ENCODE measurements at regions of chr1 and their contacts with region 1.

Region 1: DNA sequence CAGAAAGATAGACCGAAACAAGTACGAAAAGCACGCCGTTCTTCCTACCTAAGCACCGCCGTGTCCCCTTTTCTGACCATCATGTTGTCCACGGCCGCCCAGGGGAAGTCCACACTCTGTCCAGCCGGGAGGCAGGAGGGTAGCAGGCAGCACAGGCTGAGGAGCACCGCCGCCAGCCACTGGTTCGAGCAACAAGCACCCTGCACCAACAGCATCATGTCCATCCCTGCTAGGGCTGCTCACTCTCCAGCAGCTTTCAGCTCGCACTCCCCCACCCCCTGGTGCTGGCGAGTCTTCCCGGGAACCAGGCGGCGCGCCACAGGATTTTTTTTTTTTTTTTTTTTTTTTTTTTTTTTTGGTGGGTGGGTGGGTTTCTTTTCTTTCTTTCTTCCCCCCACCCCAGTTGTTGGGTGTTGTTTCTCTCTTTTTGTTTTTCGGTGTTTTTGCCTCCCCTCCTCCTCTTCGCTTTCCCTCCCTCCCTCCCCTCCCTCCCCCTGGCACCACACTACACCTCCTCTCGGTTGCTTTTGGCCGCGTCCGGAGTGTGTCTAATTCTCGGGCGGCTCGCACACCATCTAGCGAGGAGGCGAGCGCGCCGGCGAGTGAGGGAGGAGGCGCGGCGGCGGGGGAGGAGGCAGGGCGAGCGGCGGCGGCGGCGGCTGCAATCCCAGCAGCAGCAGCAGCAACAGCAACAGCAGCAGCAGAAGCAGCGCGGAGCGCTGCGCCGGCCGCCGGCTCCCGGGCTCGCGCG is at the start of gene NEGR1:
- DNase-seq: peak; percentile 77
- H3K4me3 ChIP-seq: peak within 1 kb of the TSS; percentile 39 to 60 (median 50)
- H3K27ac ChIP-seq: peak within 1 kb of the TSS; percentile 79 to 94 (median 87)
- H3K4me1 ChIP-seq: peaks cover 0 to 16% (median 7%) of the 10 kb centered on the region in 4 donors
- H3K27me3 ChIP-seq: peaks cover 40% of the 10 kb centered on the region
- CTCF ChIP-seq: peak in 1 of 5 experiments; percentile 14
- EP300 ChIP-seq: no peak
- POLR2A ChIP-seq: peak; percentile 62
- total RNA-seq, gene NEGR1: 7.0 to 10.0 (median 8.1) TPM

Region 2: DNA sequence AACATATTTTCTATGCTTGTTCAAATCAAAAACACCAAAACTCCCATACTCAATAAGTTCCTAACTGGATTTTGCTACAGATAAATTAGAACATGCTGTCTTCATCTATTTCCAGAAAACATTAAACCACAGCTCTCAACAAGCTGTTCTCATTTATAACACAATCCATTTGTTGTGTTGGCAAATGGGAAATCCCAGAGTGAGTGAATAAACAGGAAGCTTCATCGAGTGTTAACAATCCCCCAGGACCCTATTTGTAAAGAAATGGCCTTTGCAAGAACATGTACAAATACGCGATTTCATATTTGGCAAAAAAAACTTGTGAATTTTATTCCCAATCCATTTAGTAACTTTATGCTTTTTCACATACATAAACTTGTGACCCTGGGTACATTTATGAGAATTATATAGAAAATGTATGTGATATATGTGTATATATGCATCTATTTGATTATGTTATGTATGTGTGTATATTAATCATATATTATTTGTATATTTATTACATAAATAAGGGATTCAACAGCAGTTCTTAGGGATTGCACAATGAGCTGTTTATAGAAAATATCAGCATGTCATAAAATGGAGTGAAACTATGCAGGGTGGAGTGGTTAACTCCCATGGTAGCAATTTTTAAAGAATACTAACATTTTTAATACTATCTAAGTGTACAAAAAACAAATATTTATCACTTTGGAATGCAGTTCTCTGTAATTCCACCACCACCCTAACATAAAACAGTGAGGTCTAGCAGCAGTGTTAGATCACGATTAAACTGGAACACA is 160.2 kb before region 1 on chr1:
- in situ Hi-C with region 1: no loop called
- intact Hi-C with region 1: no loop called
- DNase-seq: no peak
- H3K4me3 ChIP-seq: no peak overlapping the region
- H3K27ac ChIP-seq: peak overlapping the region; percentile 16 to 39 (median 29)
- H3K4me1 ChIP-seq: no peaks in the 10 kb centered on the region
- H3K27me3 ChIP-seq: no peaks in the 10 kb centered on the region
- CTCF ChIP-seq: no peak
- EP300 ChIP-seq: no peak
- POLR2A ChIP-seq: no peak

Region 3: DNA sequence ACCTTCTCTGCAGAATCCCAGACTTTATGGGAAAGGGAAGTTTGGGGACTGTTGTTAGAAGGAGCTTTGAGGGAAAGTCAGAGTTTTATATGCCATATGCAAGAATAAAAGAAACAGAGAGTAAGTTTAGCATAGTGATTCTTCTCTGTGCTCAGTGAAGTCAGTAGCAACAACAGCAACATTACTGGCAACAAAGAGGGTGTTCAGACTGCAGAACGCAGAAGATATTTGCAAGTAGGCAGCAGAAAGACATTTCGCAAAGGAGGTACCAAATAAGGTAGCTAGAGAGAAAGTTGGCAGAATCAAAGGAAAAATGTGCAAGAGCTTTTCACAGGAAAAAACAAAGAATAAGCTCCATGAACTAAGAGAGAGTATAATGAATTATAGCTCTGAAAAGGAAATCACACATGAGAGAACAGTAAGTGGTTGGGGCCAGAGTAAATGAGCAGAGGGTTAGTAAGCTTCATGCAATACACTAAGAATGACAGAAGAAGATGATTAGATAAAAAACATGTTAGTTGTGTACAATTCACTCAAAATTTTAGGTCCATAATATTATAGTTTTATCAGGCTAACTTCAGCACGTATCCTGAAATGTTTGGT is 98.2 kb before region 1 on chr1:
- in situ Hi-C with region 1: no loop called
- intact Hi-C with region 1: loop called (anchors 5 kb)
- DNase-seq: no peak
- H3K4me3 ChIP-seq: no peak overlapping the region
- H3K27ac ChIP-seq: peak overlapping the region; percentile 1 to 50 (median 24)
- H3K4me1 ChIP-seq: peaks cover 0 to 2% (median 0%) of the 10 kb centered on the region in 4 donors
- H3K27me3 ChIP-seq: no peaks in the 10 kb centered on the region
- CTCF ChIP-seq: no peak
- EP300 ChIP-seq: no peak
- POLR2A ChIP-seq: no peak

Region 4: GRCh38 chr1:72371259-72372035 is 89.0 kb after region 1 on chr1:
- in situ Hi-C with region 1: no loop called
- intact Hi-C with region 1: no loop called
- DNase-seq: no peak
- H3K4me3 ChIP-seq: no peak overlapping the region
- H3K27ac ChIP-seq: no peak overlapping the region
- H3K4me1 ChIP-seq: no peaks in the 10 kb centered on the region
- H3K27me3 ChIP-seq: no peaks in the 10 kb centered on the region
- CTCF ChIP-seq: no peak
- EP300 ChIP-seq: no peak
- POLR2A ChIP-seq: no peak

Region 5: GRCh38 chr1:72412286-72412685 is 129.8 kb after region 1 on chr1:
- in situ Hi-C with region 1: no loop called
- intact Hi-C with region 1: no loop called
- DNase-seq: no peak
- H3K4me3 ChIP-seq: no peak overlapping the region
- H3K27ac ChIP-seq: no peak overlapping the region
- H3K4me1 ChIP-seq: no peaks in the 10 kb centered on the region
- H3K27me3 ChIP-seq: no peaks in the 10 kb centered on the region
- CTCF ChIP-seq: no peak
- EP300 ChIP-seq: no peak
- POLR2A ChIP-seq: no peak

Measured in transverse colon (tissue), 4 donors.